ENCODE measurements at regions of chrX and their contacts with region 1.

Region 1: GRCh38 chrX:47683146-47683828 is 24.3 kb upstream of the UXT start:
- DNase-seq: peak; percentile 69 to 96 (median 78)
- ATAC-seq: peak; percentile 97
- H3K4me3 ChIP-seq: peak overlapping the region; percentile 6; the same call in 1 of the 2 replicates
- H3K27ac ChIP-seq: peak overlapping the region; percentile 87
- H3K4me1 ChIP-seq: peaks cover 12 to 26% of the 10 kb centered on the region in 2 experiments; a peak in 4 of 5 replicates
- H3K27me3 ChIP-seq: no peaks in the 10 kb centered on the region
- CTCF ChIP-seq: peak; percentile 54 to 78 (median 59)
- EP300 ChIP-seq: peak; percentile 96
- POLR2A ChIP-seq: no peak
- RAD21 ChIP-seq: peak; percentile 40 to 61

Region 2: GRCh38 chrX:47658684-47659515 is 24.4 kb before region 1 on chrX and contains the start of gene UXT:
- CTCF ChIA-PET with region 1: no interaction called
- POLR2A ChIA-PET with region 1: interaction called, 4 read pairs
- in situ Hi-C with region 1: no loop called
- intact Hi-C with region 1: loop called (anchors 2 kb)
- DNase-seq: peak; percentile 82 to 97 (median 87)
- ATAC-seq: peak; percentile 92
- H3K4me3 ChIP-seq: peak within 1 kb of the TSS; percentile 55
- H3K27ac ChIP-seq: peak within 1 kb of the TSS; percentile 97
- H3K4me1 ChIP-seq: peaks cover 15 to 50% of the 10 kb centered on the region in 2 experiments
- H3K27me3 ChIP-seq: no peaks in the 10 kb centered on the region
- CTCF ChIP-seq: no peak
- EP300 ChIP-seq: no peak
- POLR2A ChIP-seq: peak; percentile 90
- RAD21 ChIP-seq: no peak
- polyA plus RNA-seq, gene UXT: 141 to 167 TPM

Region 3: GRCh38 chrX:47707031-47707780 is 23.9 kb after region 1 on chrX:
- CTCF ChIA-PET with region 1: no interaction called
- POLR2A ChIA-PET with region 1: no interaction called
- in situ Hi-C with region 1: no loop called
- intact Hi-C with region 1: loop called (anchors 1 kb)
- DNase-seq: peak; percentile 49 to 62 (median 54)
- ATAC-seq: peak; percentile 78
- H3K4me3 ChIP-seq: no peak overlapping the region
- H3K27ac ChIP-seq: no peak overlapping the region
- H3K4me1 ChIP-seq: peaks cover 9 to 40% of the 10 kb centered on the region in 2 experiments
- H3K27me3 ChIP-seq: no peaks in the 10 kb centered on the region
- CTCF ChIP-seq: no peak
- EP300 ChIP-seq: peak; percentile 23; the same call in 1 of the 2 replicates
- POLR2A ChIP-seq: no peak
- RAD21 ChIP-seq: no peak

Region 4: DNA sequence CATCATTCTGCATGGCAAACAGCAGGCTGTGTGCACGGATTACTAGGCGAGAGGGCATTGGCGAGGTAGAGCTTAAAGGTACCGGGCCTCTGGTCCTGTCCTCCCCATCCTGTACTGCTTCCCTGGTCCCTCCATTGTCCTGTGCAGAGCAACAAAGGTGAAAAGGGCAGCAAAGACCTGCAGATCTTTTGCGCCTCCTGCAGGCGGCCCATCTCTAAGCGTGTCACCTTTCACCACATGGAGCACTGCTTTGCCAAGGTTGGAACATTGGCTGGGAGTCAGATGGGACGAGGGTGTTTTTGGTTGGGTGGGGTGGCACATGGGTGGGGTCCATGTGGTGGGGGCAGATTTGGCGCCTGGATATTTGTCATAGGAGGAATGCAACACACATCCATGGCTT is 40.4 kb after region 1 on chrX:
- CTCF ChIA-PET with region 1: no interaction called
- POLR2A ChIA-PET with region 1: no interaction called
- in situ Hi-C with region 1: loop called (anchors 5 kb)
- intact Hi-C with region 1: loop called (anchors 2 kb)
- DNase-seq: peak in 3 of 4 experiments; percentile 15 to 65 (median 25)
- ATAC-seq: peak; percentile 95
- H3K4me3 ChIP-seq: no peak overlapping the region
- H3K27ac ChIP-seq: no peak overlapping the region
- H3K4me1 ChIP-seq: peaks cover 0 to 4% of the 10 kb centered on the region in 2 experiments; a peak in 3 of 5 replicates
- H3K27me3 ChIP-seq: peaks cover 0 to 9% of the 10 kb centered on the region in 2 experiments; a peak in 1 of 5 replicates
- CTCF ChIP-seq: peak; percentile 72 to 91 (median 86)
- EP300 ChIP-seq: no peak
- POLR2A ChIP-seq: no peak
- RAD21 ChIP-seq: peak; percentile 81 to 84

Region 5: DNA sequence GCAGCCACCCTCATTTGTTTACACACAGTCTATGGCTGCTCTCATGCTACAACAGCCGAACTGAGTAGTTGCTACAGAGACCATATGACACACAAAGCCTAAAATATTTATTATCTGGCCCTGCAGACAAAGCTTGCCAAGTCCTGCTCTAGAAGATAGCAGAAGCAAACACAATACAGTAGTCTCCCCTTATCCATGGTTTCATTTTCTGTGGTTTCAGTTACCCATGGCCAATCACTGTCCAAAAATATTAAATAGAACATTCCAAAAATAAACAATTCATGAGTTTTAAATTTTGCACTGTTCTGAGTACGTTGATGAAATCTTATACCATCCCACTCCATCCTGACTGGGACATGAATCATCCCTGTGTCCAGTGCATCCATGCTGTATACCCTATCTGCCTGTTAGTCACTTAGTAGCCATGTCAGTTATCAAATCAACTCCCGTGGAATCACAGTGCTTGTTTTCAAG is 113.2 kb after region 1 on chrX:
- CTCF ChIA-PET with region 1: no interaction called
- POLR2A ChIA-PET with region 1: no interaction called
- in situ Hi-C with region 1: no loop called
- intact Hi-C with region 1: loop called (anchors 5 kb)
- DNase-seq: peak in 2 of 4 experiments; percentile 18 to 54
- ATAC-seq: peak; percentile 78
- H3K4me3 ChIP-seq: no peak overlapping the region
- H3K27ac ChIP-seq: no peak overlapping the region
- H3K4me1 ChIP-seq: peaks cover 0 to 6% of the 10 kb centered on the region in 2 experiments; a peak in 2 of 5 replicates
- H3K27me3 ChIP-seq: no peaks in the 10 kb centered on the region
- CTCF ChIP-seq: no peak
- EP300 ChIP-seq: peak; percentile 76
- POLR2A ChIP-seq: no peak
- RAD21 ChIP-seq: no peak

Region 6: DNA sequence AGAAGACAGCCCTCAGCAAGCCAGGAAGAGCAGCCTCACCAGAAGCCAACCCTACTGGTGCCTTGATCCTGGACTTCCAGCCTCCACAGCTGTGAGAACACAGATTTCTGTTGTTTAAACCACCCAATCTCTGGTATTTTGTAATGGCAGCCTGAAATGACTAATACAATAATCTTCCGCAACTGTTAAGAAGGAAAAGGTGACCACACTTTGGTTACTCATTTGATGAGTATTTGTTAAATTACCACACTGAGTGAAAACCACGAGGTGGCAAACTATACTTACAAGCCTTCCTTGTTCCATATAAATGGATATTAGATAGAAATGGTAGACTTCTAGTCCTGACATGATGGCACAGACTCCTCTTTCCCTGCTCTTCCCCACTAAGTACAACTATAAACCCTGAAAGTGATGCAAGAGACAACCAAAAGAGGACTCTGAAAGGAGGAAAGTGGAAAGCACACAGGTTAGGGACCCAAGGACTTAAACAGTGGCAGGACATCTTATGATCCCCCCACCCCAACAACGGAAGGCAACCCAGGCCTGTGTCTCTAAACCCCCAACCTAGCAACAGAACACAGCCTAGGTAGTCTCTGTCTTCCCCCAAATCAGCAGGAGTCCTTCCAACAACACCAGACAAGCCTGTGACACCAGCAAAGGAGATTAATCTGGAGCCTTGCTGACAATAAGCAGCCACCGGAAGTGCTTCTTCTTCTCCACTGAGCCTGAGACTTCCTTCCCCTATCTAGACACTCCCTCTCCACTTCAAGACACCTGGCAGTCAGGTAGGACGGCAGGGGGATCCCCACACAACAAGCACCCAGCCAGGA is 308.2 kb after region 1 on chrX:
- CTCF ChIA-PET with region 1: no interaction called
- POLR2A ChIA-PET with region 1: no interaction called
- in situ Hi-C with region 1: no loop called
- intact Hi-C with region 1: no loop called
- DNase-seq: no peak
- ATAC-seq: no peak
- H3K4me3 ChIP-seq: no peak overlapping the region
- H3K27ac ChIP-seq: no peak overlapping the region
- H3K4me1 ChIP-seq: no peaks in the 10 kb centered on the region
- H3K27me3 ChIP-seq: no peaks in the 10 kb centered on the region
- CTCF ChIP-seq: no peak
- EP300 ChIP-seq: no peak
- POLR2A ChIP-seq: no peak
- RAD21 ChIP-seq: no peak